ENCODE measurements at regions of chrX and their contacts with region 1.

Region 1: GRCh38 chrX:56248492-56248891 is 16.3 kb downstream of the KLF8 start:
- DNase-seq: peak; percentile 26 to 45
- ATAC-seq: peak in 5 of 8 donors; percentile 38 to 58 (median 49)
- H3K4me3 ChIP-seq: no peak overlapping the region
- H3K27ac ChIP-seq: no peak overlapping the region
- H3K4me1 ChIP-seq: peaks cover 0 to 4% (median 0%) of the 10 kb centered on the region in 9 donors
- H3K27me3 ChIP-seq: peaks cover 0 to 11% (median 0%) of the 10 kb centered on the region in 7 donors
- CTCF ChIP-seq: peak; percentile 28 to 71 (median 65)

Region 2: GRCh38 chrX:56029691-56030090 is 218.8 kb before region 1 on chrX:
- intact Hi-C with region 1: no loop called
- DNase-seq: no peak
- ATAC-seq: no peak
- H3K4me3 ChIP-seq: no peak overlapping the region
- H3K27ac ChIP-seq: no peak overlapping the region
- H3K4me1 ChIP-seq: no peaks in the 10 kb centered on the region
- H3K27me3 ChIP-seq: no peaks in the 10 kb centered on the region
- CTCF ChIP-seq: no peak

Region 3: GRCh38 chrX:56089388-56089787 is 159.1 kb before region 1 on chrX:
- intact Hi-C with region 1: loop called in 1 of 10 experiments (anchors 10 kb)
- DNase-seq: no peak
- ATAC-seq: no peak
- H3K4me3 ChIP-seq: no peak overlapping the region
- H3K27ac ChIP-seq: no peak overlapping the region
- H3K4me1 ChIP-seq: no peaks in the 10 kb centered on the region
- H3K27me3 ChIP-seq: peaks cover 0 to 27% (median 0%) of the 10 kb centered on the region in 7 donors
- CTCF ChIP-seq: no peak

Region 4: GRCh38 chrX:56219700-56220099 is 28.8 kb before region 1 on chrX:
- intact Hi-C with region 1: loop called in 1 of 10 experiments (anchors 2 kb)
- DNase-seq: no peak
- ATAC-seq: no peak
- H3K4me3 ChIP-seq: no peak overlapping the region
- H3K27ac ChIP-seq: no peak overlapping the region
- H3K4me1 ChIP-seq: no peaks in the 10 kb centered on the region
- H3K27me3 ChIP-seq: peaks cover 0 to 19% (median 0%) of the 10 kb centered on the region in 7 donors
- CTCF ChIP-seq: peak in 7 of 9 donors; percentile 19 to 48 (median 30)